Transverse colon (tissue), 4 donors: ENCODE measurements at regions of chr9 and their contacts with region 1.

Region 1: GRCh38 chr9:137578518-137579258 is at the start of gene DPH7:
- DNase-seq: peak; percentile 97
- H3K4me3 ChIP-seq: peak within 1 kb of the TSS; percentile 70 to 94 (median 80)
- H3K27ac ChIP-seq: peak within 1 kb of the TSS; percentile 79 to 97 (median 91)
- H3K4me1 ChIP-seq: peaks cover 15 to 30% (median 25%) of the 10 kb centered on the region in 4 donors
- H3K27me3 ChIP-seq: no peaks in the 10 kb centered on the region
- CTCF ChIP-seq: peak; percentile 85 to 97 (median 94)
- EP300 ChIP-seq: no peak
- POLR2A ChIP-seq: peak; percentile 71
- total RNA-seq, gene DPH7: 28.8 to 53.5 (median 36.6) TPM

Region 2: GRCh38 chr9:137590462-137591383 is 12.0 kb after region 1 on chr9 and contains the start of gene ZMYND19:
- in situ Hi-C with region 1: no loop called
- intact Hi-C with region 1: no loop called
- DNase-seq: peak; percentile 92
- H3K4me3 ChIP-seq: peak within 1 kb of the TSS; percentile 71 to 89 (median 77)
- H3K27ac ChIP-seq: peak within 1 kb of the TSS; percentile 79 to 82 (median 82)
- H3K4me1 ChIP-seq: peaks cover 6 to 20% (median 17%) of the 10 kb centered on the region in 4 donors
- H3K27me3 ChIP-seq: no peaks in the 10 kb centered on the region
- CTCF ChIP-seq: no peak
- EP300 ChIP-seq: no peak
- POLR2A ChIP-seq: peak; percentile 31
- total RNA-seq, gene ZMYND19: 6.7 to 11.5 (median 9.8) TPM

Region 3: GRCh38 chr9:137618105-137619067 is 39.7 kb after region 1 on chr9 and contains the start of gene EHMT1:
- in situ Hi-C with region 1: no loop called
- intact Hi-C with region 1: loop called (anchors 5 kb)
- DNase-seq: peak; percentile 91
- H3K4me3 ChIP-seq: peak within 1 kb of the TSS; percentile 69 to 88 (median 82)
- H3K27ac ChIP-seq: peak within 1 kb of the TSS; percentile 87 to 98 (median 94)
- H3K4me1 ChIP-seq: peaks cover 21 to 42% (median 35%) of the 10 kb centered on the region in 4 donors
- H3K27me3 ChIP-seq: no peaks in the 10 kb centered on the region
- CTCF ChIP-seq: peak in 1 of 5 experiments; percentile 13
- EP300 ChIP-seq: no peak
- POLR2A ChIP-seq: peak; percentile 85
- total RNA-seq, gene EHMT1: 93.8 to 184 (median 139) TPM